H1 (cell line): ENCODE measurements at regions of chr19 and their contacts with region 1.

Region 1: GRCh38 chr19:47863514-47863936 is 4.5 kb downstream of the TPRX2 start:
- DNase-seq: peak; percentile 73 to 100
- H3K4me3 ChIP-seq: peak overlapping the region in 1 of 4 experiments; percentile 10; a peak in 1 of 8 replicates
- H3K27ac ChIP-seq: no peak overlapping the region
- H3K4me1 ChIP-seq: peaks cover 0 to 5% (median 2%) of the 10 kb centered on the region in 4 experiments; a peak in 2 of 7 replicates
- H3K27me3 ChIP-seq: no peaks in the 10 kb centered on the region
- CTCF ChIP-seq: peak; percentile 96 to 98 (median 96)
- EP300 ChIP-seq: no peak; a peak in 1 of 3 replicates
- POLR2A ChIP-seq: no peak
- RAD21 ChIP-seq: peak; percentile 92 to 93

Region 2: DNA sequence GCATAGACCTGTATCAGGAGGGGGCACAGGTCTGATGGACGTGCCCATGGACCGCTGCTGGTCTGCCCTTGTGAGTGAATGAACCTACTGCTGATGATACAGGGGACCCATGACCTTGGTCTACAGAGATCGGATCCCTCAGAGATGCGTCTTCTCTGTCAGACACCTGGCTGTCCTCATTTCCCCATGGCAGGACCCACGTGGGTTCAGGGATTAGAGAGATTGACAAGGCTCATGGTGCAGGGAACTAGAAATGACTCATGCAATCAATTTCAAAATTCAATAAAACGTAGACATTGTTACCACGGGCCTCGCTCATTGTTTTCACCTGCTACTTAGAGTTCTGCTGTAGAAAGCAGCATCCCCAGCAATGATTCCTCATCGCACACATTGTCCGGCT is 58.2 kb before region 1 on chr19:
- CTCF ChIA-PET with region 1: interaction called, 19 read pairs
- POLR2A ChIA-PET with region 1: no interaction called
- DNase-seq: no peak
- H3K4me3 ChIP-seq: no peak overlapping the region
- H3K27ac ChIP-seq: no peak overlapping the region
- H3K4me1 ChIP-seq: no peaks in the 10 kb centered on the region
- H3K27me3 ChIP-seq: no peaks in the 10 kb centered on the region
- CTCF ChIP-seq: no peak
- EP300 ChIP-seq: no peak
- POLR2A ChIP-seq: no peak
- RAD21 ChIP-seq: no peak

Region 3: DNA sequence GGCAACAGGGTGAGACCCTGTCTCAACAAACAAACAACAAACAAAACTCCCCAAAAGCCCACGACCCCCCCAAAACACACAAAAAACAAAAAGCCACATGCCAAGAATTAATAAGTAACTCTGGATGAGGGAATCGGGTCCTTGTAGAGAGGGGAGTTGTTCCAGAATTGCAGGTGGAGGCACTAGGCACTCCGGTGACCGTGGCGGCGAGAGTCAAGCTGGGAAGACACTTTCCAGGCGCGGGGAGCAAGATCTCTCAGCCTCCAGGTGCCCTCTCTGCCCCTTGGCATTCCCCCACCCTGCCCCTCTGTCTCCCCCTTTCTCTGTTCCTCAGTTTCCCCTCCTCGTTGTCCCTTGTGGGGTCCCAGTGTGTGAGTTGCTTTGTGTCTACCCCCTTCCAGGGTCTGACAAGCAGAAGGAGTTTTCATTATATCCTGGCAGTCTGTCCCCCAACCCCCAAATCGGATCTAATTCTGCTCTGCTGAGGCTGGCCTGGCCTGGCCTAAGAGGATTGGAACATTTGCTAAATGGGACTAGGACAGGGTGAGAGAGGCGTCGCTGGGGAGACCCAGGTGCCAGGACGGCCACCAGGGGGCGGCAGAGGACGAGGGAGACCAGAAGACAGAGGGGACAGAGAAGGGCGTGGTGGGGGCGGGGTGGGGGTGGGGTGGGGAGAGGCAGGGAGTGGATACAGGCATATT is 50.1 kb before region 1 on chr19:
- CTCF ChIA-PET with region 1: interaction called, 31 read pairs
- POLR2A ChIA-PET with region 1: no interaction called
- DNase-seq: peak; percentile 78 to 99
- H3K4me3 ChIP-seq: no peak overlapping the region
- H3K27ac ChIP-seq: no peak overlapping the region
- H3K4me1 ChIP-seq: no peaks in the 10 kb centered on the region; a peak in 2 of 7 replicates
- H3K27me3 ChIP-seq: no peaks in the 10 kb centered on the region
- CTCF ChIP-seq: peak; percentile 70 to 91 (median 85)
- EP300 ChIP-seq: no peak
- POLR2A ChIP-seq: no peak
- RAD21 ChIP-seq: peak; percentile 68 to 78

Region 4: GRCh38 chr19:47839913-47840312 is 23.6 kb before region 1 on chr19:
- CTCF ChIA-PET with region 1: interaction called, 12 read pairs
- POLR2A ChIA-PET with region 1: interaction called, 3 read pairs
- DNase-seq: no peak
- H3K4me3 ChIP-seq: no peak overlapping the region
- H3K27ac ChIP-seq: no peak overlapping the region
- H3K4me1 ChIP-seq: peaks cover 0 to 10% (median 4%) of the 10 kb centered on the region in 4 experiments; a peak in 3 of 7 replicates
- H3K27me3 ChIP-seq: no peaks in the 10 kb centered on the region
- CTCF ChIP-seq: no peak
- EP300 ChIP-seq: no peak
- POLR2A ChIP-seq: no peak
- RAD21 ChIP-seq: no peak

Region 5: GRCh38 chr19:47848823-47849473 is 14.6 kb before region 1 on chr19:
- CTCF ChIA-PET with region 1: interaction called, 83 read pairs
- POLR2A ChIA-PET with region 1: interaction called, 31 read pairs
- DNase-seq: peak; percentile 62 to 91
- H3K4me3 ChIP-seq: peak overlapping the region; percentile 26 to 52 (median 34); a peak in 7 of 8 replicates
- H3K27ac ChIP-seq: peak overlapping the region; percentile 83
- H3K4me1 ChIP-seq: peaks cover 5 to 12% (median 6%) of the 10 kb centered on the region in 4 experiments; a peak in 5 of 7 replicates
- H3K27me3 ChIP-seq: no peaks in the 10 kb centered on the region
- CTCF ChIP-seq: peak; percentile 60 to 63 (median 61); a peak in 3 of 4 replicates
- EP300 ChIP-seq: no peak
- POLR2A ChIP-seq: peak in 1 of 2 experiments; percentile 17; a peak in 1 of 3 replicates
- RAD21 ChIP-seq: peak in 1 of 2 experiments; percentile 42; a peak in 3 of 4 replicates

Region 6: GRCh38 chr19:47886010-47886559 is 22.6 kb after region 1 on chr19 and contains the start of gene SULT2A1:
- CTCF ChIA-PET with region 1: interaction called, 14 read pairs
- POLR2A ChIA-PET with region 1: no interaction called
- DNase-seq: no peak
- H3K4me3 ChIP-seq: no peak within 1 kb of the TSS
- H3K27ac ChIP-seq: no peak within 1 kb of the TSS
- H3K4me1 ChIP-seq: no peaks in the 10 kb centered on the region
- H3K27me3 ChIP-seq: no peaks in the 10 kb centered on the region
- CTCF ChIP-seq: no peak
- EP300 ChIP-seq: no peak
- POLR2A ChIP-seq: no peak
- RAD21 ChIP-seq: no peak
- total RNA-seq, gene SULT2A1: not detected in 2 replicates

Region 7: GRCh38 chr19:48053856-48054255 is 190.3 kb after region 1 on chr19:
- CTCF ChIA-PET with region 1: no interaction called
- POLR2A ChIA-PET with region 1: no interaction called
- DNase-seq: no peak
- H3K4me3 ChIP-seq: no peak overlapping the region
- H3K27ac ChIP-seq: no peak overlapping the region
- H3K4me1 ChIP-seq: no peaks in the 10 kb centered on the region
- H3K27me3 ChIP-seq: no peaks in the 10 kb centered on the region
- CTCF ChIP-seq: no peak
- EP300 ChIP-seq: no peak
- POLR2A ChIP-seq: no peak
- RAD21 ChIP-seq: no peak